ENCODE measurements at regions of chr1 and their contacts with region 1.

Region 1: DNA sequence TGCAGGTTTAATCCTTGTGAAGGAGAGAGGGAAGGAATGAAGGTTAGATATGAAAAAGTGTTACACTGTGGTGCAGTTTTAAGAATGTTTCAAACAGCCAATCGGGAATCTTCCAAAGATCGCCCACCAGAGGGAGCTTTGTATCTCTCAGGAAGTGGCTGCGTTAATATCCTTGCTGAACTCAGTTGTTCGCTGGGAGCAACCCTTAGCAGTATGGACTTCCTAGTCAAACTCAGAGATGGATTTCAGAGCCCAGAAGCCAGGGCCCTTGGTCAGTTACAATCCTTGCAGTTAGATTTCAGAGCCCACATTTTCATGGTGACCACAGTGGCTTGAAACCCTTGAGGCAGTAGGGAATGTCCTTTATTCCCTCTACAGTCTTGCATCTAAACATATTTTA is 136.2 kb downstream of the NTNG1 start:
- DNase-seq: no peak
- ATAC-seq: no peak
- H3K4me3 Mint-ChIP-seq: no peak overlapping the region
- H3K27ac Mint-ChIP-seq: no peak overlapping the region
- H3K4me1 Mint-ChIP-seq: peaks cover 15% of the 10 kb centered on the region
- H3K27me3 Mint-ChIP-seq: no peaks in the 10 kb centered on the region
- CTCF ChIP-seq: no peak

Region 2: DNA sequence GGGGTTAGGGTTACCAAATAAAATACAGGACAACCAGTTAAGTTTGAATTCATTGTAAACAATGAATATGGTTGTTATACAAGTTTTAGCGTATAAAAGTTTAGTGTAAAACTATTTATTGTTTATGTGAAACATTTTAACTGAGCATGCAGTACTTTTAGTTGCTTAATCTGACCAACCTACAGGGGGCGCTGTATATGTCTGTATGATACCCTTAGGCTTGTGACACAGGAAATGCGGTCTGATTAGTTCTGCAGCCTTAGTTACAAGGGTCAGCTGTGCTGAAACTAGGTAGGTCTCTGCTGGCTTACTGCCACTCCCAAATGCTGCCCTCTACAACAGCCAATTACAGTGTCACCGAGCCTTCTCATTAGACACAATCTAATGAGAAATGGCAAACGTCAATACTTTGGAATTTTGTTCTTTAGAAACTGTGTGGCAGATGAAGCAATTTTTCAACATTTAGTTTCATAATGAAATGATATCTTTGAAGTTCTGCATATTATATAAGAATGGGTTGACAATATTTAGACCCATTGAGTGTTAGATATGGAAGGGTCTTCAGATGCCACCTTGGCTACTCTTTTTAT is 80.0 kb before region 1 on chr1:
- CTCF ChIA-PET with region 1: interaction called, 11 read pairs
- POLR2A ChIA-PET with region 1: no interaction called
- intact Hi-C with region 1: no loop called
- DNase-seq: no peak
- ATAC-seq: peak; percentile 74
- H3K4me3 Mint-ChIP-seq: no peak overlapping the region
- H3K27ac Mint-ChIP-seq: no peak overlapping the region
- H3K4me1 Mint-ChIP-seq: peaks cover 3% of the 10 kb centered on the region
- H3K27me3 Mint-ChIP-seq: no peaks in the 10 kb centered on the region
- CTCF ChIP-seq: no peak

Region 3: GRCh38 chr1:107480548-107481415 is 203.8 kb after region 1 on chr1:
- CTCF ChIA-PET with region 1: interaction called, 4 read pairs
- POLR2A ChIA-PET with region 1: no interaction called
- intact Hi-C with region 1: loop called (anchors 2 kb)
- DNase-seq: peak; percentile 50
- ATAC-seq: peak; percentile 98
- H3K4me3 Mint-ChIP-seq: peak overlapping the region; percentile 73
- H3K27ac Mint-ChIP-seq: peak overlapping the region; percentile 54
- H3K4me1 Mint-ChIP-seq: peaks cover 15% of the 10 kb centered on the region
- H3K27me3 Mint-ChIP-seq: no peaks in the 10 kb centered on the region
- CTCF ChIP-seq: no peak

Region 4: DNA sequence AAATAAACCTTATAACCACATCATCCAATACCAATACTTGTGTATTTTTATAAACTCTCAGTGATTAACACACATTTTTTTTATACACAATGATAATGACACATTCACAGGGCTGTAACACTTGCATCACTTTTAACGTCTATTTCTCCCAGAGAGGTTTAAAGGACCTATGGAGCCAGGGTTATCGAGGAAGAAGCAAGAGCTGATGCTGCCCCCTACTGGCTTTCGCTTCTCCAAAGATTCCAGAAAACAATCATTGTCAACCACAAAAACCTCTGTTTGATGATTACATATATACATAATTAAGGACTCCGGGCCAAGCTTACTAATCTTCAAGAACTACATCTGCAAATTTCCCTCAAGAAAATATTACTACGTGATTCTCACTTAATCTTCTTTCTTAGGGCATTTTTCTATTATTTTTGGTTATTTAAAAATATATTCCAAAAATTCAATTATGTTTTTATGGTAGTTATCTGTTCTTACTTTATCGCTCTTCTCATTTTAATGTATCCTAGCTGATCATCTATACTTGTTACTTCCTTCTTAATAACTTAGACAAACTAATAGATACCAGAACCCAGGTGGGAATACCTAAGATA is 473.4 kb after region 1 on chr1:
- CTCF ChIA-PET with region 1: no interaction called
- POLR2A ChIA-PET with region 1: no interaction called
- intact Hi-C with region 1: loop called (anchors 2 kb)
- DNase-seq: no peak
- ATAC-seq: no peak
- H3K4me3 Mint-ChIP-seq: no peak overlapping the region
- H3K27ac Mint-ChIP-seq: no peak overlapping the region
- H3K4me1 Mint-ChIP-seq: peaks cover 2% of the 10 kb centered on the region
- H3K27me3 Mint-ChIP-seq: no peaks in the 10 kb centered on the region
- CTCF ChIP-seq: no peak